Mammary epithelial cell (primary cell): ENCODE measurements at regions of chr6 and their contacts with region 1.

Region 1: GRCh38 chr6:71446057-71446456 is 157.4 kb downstream of the OGFRL1 start:
- DNase-seq: no peak
- H3K4me3 ChIP-seq: no peak overlapping the region
- H3K27ac ChIP-seq: no peak overlapping the region
- H3K4me1 ChIP-seq: no peaks in the 10 kb centered on the region
- H3K27me3 ChIP-seq: no peaks in the 10 kb centered on the region
- CTCF ChIP-seq: no peak

Region 2: DNA sequence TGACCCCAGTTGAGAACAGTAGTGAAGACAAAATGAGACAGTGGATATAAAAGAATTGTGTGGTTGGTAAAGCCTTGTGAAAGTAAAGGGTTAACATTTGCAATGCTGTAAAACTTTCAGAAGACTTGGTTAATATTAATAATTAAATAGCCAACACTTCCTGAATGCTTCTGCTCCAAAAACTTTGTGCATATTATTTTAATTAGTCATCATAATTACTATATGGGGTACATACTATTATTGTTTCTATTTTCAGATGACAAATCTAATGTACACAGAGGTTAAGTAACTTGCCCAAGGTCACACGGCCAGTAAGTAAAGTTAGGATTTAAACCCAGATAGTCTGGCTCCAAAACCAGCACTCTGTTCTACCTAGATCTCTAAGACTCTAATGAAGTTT is 133.8 kb after region 1 on chr6:
- CTCF ChIA-PET with region 1: no interaction called
- dilution Hi-C with region 1: no loop called
- in situ Hi-C with region 1: no loop called
- intact Hi-C with region 1: no loop called
- DNase-seq: no peak
- H3K4me3 ChIP-seq: no peak overlapping the region
- H3K27ac ChIP-seq: no peak overlapping the region
- H3K4me1 ChIP-seq: no peaks in the 10 kb centered on the region
- H3K27me3 ChIP-seq: no peaks in the 10 kb centered on the region
- CTCF ChIP-seq: no peak

Region 3: GRCh38 chr6:72363844-72364740 is 918.0 kb after region 1 on chr6:
- CTCF ChIA-PET with region 1: interaction called, 29 read pairs
- dilution Hi-C with region 1: no loop called
- in situ Hi-C with region 1: no loop called
- intact Hi-C with region 1: no loop called
- DNase-seq: peak; percentile 85
- H3K4me3 ChIP-seq: no peak overlapping the region
- H3K27ac ChIP-seq: peak overlapping the region; percentile 46
- H3K4me1 ChIP-seq: peaks cover 17% of the 10 kb centered on the region
- H3K27me3 ChIP-seq: no peaks in the 10 kb centered on the region
- CTCF ChIP-seq: no peak